Common myeloid progenitor, CD34-positive (primary cell): ENCODE measurements at regions of chr14 and their contacts with region 1.

Region 1: GRCh38 chr14:105817971-105818711 is 291.8 kb downstream of the TMEM121 start:
- DNase-seq: peak; percentile 93 to 100 (median 100)
- H3K4me3 ChIP-seq: peak overlapping the region in 1 of 7 experiments; percentile 34
- H3K27ac ChIP-seq: peak overlapping the region; percentile 93
- H3K4me1 ChIP-seq: peaks cover 7 to 70% (median 58%) of the 10 kb centered on the region in 4 experiments
- H3K27me3 ChIP-seq: no peaks in the 10 kb centered on the region

Region 2: DNA sequence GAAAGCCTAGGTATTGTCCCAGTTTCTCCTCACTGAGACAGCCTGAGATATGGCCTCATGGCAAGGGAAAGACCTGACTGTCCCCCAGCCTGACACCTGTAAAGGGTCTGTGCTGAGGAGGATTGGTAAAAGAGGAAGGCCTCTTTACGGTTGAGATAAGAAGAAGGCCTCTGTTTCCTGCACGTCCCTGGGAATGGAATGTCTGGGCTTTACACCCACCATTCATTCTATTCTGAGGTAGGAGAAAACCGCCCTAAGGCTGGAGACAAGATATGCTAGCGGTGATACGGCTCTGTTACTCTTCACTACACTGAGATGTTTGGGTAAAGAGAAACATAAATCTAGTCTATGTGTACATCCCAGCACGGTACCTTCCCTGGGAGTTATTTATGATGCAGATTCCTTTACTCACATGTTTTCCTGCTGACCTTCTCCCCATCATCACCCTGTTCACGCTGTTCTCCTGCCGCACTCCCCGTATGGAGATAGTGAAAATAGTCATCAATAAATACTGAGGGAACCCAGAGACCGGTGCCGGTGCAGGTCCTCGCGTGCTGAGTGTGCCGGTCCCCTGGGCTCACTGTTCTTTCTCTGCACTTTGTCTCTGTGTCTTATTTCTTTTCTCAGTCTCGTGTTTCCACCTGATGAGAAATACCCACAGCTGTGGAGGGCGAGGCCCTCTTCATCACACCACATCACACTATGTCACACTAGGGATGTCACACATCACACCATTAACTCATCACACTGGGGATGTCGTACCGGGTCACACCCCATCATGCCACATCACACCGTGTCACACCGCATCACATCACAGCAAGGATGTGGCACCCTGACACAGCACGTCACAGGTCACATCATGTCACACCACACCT is 85.2 kb before region 1 on chr14:
- CTCF ChIA-PET with region 1: no interaction called
- POLR2A ChIA-PET with region 1: no interaction called
- DNase-seq: peak in 1 of 3 donors; percentile 18
- H3K4me3 ChIP-seq: no peak overlapping the region
- H3K27ac ChIP-seq: no peak overlapping the region
- H3K4me1 ChIP-seq: peaks cover 0 to 23% (median 14%) of the 10 kb centered on the region in 4 experiments
- H3K27me3 ChIP-seq: no peaks in the 10 kb centered on the region

Region 3: GRCh38 chr14:105861985-105862465 is 43.9 kb after region 1 on chr14:
- CTCF ChIA-PET with region 1: interaction called, 9 read pairs
- POLR2A ChIA-PET with region 1: interaction called, 31 read pairs
- DNase-seq: peak; percentile 90 to 98 (median 98)
- H3K4me3 ChIP-seq: peak overlapping the region in 6 of 7 experiments; percentile 74 to 90 (median 82)
- H3K27ac ChIP-seq: peak overlapping the region; percentile 68 to 75
- H3K4me1 ChIP-seq: peaks cover 0 to 97% (median 75%) of the 10 kb centered on the region in 4 experiments
- H3K27me3 ChIP-seq: no peaks in the 10 kb centered on the region

Region 4: GRCh38 chr14:105879867-105880561 is 61.9 kb after region 1 on chr14:
- CTCF ChIA-PET with region 1: interaction called, 3 read pairs
- POLR2A ChIA-PET with region 1: interaction called, 17 read pairs
- DNase-seq: peak; percentile 83 to 93 (median 91)
- H3K4me3 ChIP-seq: peak overlapping the region; percentile 73 to 93 (median 86)
- H3K27ac ChIP-seq: peak overlapping the region; percentile 72 to 85
- H3K4me1 ChIP-seq: peaks cover 0 to 89% (median 73%) of the 10 kb centered on the region in 4 experiments
- H3K27me3 ChIP-seq: no peaks in the 10 kb centered on the region

Region 5: DNA sequence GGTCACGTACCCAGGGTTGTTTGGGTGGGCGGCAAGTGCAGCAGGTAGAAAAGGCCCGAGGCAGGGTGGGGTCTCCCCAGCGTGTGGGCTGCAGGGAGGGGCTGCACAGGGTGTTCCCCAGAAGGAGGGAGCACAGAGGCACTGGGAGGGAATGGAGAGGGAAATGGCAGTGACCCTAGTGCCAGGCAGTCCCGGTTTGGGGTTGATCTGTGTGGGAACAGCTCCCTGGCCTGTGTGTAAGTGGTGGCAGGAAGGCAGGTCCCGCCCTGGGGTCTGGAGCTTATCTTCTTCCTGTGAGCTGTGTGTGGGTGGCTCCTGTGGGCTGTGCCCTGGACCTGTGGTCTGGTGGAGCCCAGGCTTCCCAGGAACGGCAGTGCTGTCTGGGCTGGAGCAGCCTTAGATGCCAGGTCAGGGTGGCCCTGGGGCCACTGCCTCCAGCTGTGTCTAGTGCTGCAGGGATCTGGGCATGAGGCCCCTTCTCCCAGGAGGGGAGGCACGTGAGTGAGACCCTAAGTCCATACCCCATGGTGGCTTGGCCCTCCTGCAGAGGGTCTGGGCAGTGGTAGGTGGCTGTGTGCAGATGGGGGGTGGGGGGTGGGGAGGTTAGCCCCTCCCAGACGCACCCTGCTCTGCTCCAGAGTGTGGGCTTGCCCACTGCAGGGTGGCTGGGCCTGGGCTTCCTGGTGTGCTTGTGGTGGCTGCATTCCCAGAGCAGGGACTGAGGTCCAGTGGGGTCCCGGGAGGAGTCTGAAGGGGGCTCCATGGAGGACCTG is 71.7 kb after region 1 on chr14:
- CTCF ChIA-PET with region 1: no interaction called
- POLR2A ChIA-PET with region 1: interaction called, 10 read pairs
- DNase-seq: peak; percentile 62 to 90 (median 81)
- H3K4me3 ChIP-seq: peak overlapping the region; percentile 71 to 96 (median 81)
- H3K27ac ChIP-seq: peak overlapping the region; percentile 61 to 80
- H3K4me1 ChIP-seq: peaks cover 0 to 91% (median 70%) of the 10 kb centered on the region in 4 experiments
- H3K27me3 ChIP-seq: no peaks in the 10 kb centered on the region

Region 6: DNA sequence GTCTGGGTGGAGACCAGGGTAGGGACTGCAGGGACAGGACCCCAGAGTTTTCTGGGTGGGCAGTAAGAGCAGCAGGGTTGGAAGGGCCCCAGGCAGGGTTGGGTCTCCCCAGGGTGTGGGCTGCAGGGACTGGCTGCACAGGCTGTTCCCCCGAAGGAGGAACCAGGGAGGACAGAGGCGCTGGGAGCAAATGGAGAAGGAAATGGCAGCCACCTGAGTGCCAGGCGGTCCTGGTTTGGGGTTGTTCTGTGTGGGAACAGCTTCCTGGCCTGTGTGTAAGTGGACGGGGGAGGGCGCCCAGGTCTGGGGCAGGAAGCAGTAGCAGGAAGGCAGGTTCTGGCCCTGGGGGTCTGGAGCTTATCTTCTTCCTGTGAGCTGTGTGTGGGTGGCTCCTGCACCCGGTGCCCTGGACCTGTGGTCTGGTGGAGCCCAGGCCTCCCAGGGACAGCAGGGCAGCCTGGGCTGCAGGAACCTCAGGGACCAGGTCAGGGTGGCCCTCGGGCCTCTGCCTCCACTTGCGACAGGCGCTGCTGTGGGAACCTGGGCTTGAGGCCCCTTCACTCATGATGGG is 81.0 kb after region 1 on chr14:
- CTCF ChIA-PET with region 1: no interaction called
- POLR2A ChIA-PET with region 1: interaction called, 12 read pairs
- DNase-seq: peak; percentile 83 to 91 (median 85)
- H3K4me3 ChIP-seq: peak overlapping the region; percentile 5 to 96 (median 67)
- H3K27ac ChIP-seq: peak overlapping the region in 1 of 2 experiments; percentile 14
- H3K4me1 ChIP-seq: peaks cover 0 to 98% (median 87%) of the 10 kb centered on the region in 4 experiments
- H3K27me3 ChIP-seq: no peaks in the 10 kb centered on the region